ENCODE measurements at regions of chr1 and their contacts with region 1.

Region 1: DNA sequence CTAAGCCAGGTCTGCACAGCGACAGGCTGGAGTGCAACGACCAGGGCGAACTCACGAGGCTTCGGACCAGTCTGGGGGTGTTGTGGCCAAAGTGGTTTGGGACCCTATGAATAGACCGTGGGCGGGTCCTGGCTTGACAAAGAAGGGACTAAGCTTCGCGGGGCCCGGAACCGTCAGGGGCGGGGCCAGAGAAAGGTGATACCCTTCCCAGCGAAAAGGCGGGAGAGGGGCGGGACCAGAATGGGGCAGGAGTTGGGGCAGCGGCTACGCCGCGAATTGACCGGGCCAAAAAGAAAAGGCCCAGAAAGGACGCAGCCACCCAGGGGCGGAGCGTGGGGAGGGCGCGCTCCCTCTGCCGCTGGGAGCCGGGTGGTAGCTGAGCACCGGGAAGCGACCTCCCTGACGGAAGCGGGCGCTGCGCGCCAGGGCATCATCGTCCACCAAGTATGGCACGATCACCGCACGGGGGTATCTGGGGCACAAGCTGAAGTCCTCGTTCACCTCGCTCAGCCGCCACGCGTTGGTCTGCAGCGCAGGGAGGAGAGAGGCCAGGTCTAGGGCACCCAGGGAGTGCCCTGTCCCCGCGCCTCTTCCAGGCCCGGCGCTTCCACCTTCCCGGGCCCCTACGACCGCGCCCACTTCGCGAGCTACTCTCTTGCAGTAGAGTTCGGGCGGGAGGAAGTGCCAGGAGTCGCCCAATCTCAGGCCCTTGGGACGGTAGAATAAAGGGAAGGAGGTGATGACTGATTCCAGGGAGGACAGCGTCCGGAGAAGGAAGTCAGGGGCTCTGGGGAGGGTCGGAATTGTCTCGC is 6.7 kb upstream of the FAM167B start:
- DNase-seq: peak in 13 of 14 experiments; percentile 38 to 86 (median 63)
- ATAC-seq: peak; percentile 75
- H3K4me3 ChIP-seq: peak overlapping the region; percentile 90
- H3K4me3 Mint-ChIP-seq: peak overlapping the region; percentile 94
- H3K27ac ChIP-seq: peak overlapping the region; percentile 15 to 50
- H3K27ac Mint-ChIP-seq: peak overlapping the region; percentile 64
- H3K4me1 ChIP-seq: peaks cover 33% of the 10 kb centered on the region
- H3K4me1 Mint-ChIP-seq: peaks cover 25% of the 10 kb centered on the region
- H3K27me3 ChIP-seq: no peaks in the 10 kb centered on the region
- H3K27me3 Mint-ChIP-seq: no peaks in the 10 kb centered on the region
- CTCF ChIP-seq: peak; percentile 52

Region 2: DNA sequence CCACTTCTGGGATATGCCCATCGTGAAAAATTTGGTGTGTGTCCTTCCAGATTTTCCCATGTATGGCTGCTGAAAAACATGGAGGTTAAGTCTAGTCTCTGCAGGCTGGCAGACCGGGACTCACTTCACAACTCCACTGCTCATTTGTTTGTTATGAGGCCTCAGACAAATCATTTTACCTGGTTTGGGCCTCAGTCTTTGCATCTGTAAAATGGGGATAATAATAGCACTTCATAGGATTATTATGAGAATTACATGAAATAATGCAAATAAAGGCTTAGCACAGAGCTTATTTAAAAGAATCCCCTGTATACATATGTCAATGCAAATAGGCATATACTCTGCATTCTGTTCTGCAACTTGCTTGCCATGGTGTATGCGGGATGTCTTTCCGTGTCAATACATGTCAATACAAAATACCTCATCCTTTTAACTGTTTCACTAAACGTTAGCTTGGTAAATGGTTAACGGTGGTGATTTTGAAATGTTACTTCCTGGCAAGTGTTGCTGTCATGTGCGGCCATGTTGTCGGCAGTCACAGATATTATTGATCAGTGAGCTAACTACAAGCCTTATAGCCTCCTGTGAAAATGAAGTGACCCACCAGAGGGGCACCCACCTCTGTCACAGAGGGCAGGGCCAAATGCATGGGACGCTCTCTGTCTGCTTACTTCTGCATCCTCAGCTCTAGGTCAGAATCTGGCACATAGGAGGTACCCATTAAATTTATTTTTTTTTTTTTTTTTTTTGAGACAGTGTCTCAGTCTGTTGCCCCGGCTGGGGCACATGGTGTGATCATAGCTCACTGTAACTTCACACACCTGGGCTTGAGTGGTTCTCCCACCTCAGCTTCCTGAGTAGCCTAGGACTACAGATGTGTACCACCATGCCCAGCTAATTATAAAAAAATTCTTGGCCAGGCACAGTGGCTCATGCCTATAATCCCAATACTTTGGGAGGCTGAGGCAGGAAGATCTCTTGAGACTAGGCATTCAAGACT is 15.0 kb after region 1 on chr1:
- CTCF ChIA-PET with region 1: interaction called, 48 read pairs
- POLR2A ChIA-PET with region 1: interaction called, 543 read pairs
- intact Hi-C with region 1: loop called in 1 of 2 experiments (anchors 1 kb)
- DNase-seq: peak in 5 of 14 experiments; percentile 19 to 60 (median 53)
- ATAC-seq: peak; percentile 39
- H3K4me3 ChIP-seq: peak overlapping the region; percentile 71
- H3K4me3 Mint-ChIP-seq: peak overlapping the region; percentile 91
- H3K27ac ChIP-seq: peak overlapping the region; percentile 37 to 94
- H3K27ac Mint-ChIP-seq: peak overlapping the region; percentile 99
- H3K4me1 ChIP-seq: peaks cover 79% of the 10 kb centered on the region
- H3K4me1 Mint-ChIP-seq: peaks cover 57% of the 10 kb centered on the region
- H3K27me3 ChIP-seq: no peaks in the 10 kb centered on the region
- H3K27me3 Mint-ChIP-seq: no peaks in the 10 kb centered on the region
- CTCF ChIP-seq: no peak

Region 3: GRCh38 chr1:32291708-32292492 is 51.6 kb after region 1 on chr1 and contains the start of gene HDAC1:
- CTCF ChIA-PET with region 1: interaction called, 27 read pairs
- POLR2A ChIA-PET with region 1: interaction called, 175 read pairs
- intact Hi-C with region 1: no loop called
- DNase-seq: peak; percentile 93 to 98 (median 96)
- ATAC-seq: peak; percentile 91
- H3K4me3 ChIP-seq: peak within 1 kb of the TSS; percentile 98
- H3K4me3 Mint-ChIP-seq: peak within 1 kb of the TSS; percentile 100
- H3K27ac ChIP-seq: peak within 1 kb of the TSS; percentile 81
- H3K27ac Mint-ChIP-seq: peak within 1 kb of the TSS; percentile 92
- H3K4me1 ChIP-seq: peaks cover 67% of the 10 kb centered on the region
- H3K4me1 Mint-ChIP-seq: peaks cover 54% of the 10 kb centered on the region
- H3K27me3 ChIP-seq: no peaks in the 10 kb centered on the region
- H3K27me3 Mint-ChIP-seq: no peaks in the 10 kb centered on the region
- CTCF ChIP-seq: no peak
- total RNA-seq, gene HDAC1: 56.9 to 61.0 TPM

Region 4: GRCh38 chr1:32372149-32372756 is 131.9 kb after region 1 on chr1:
- CTCF ChIA-PET with region 1: interaction called, 19 read pairs
- POLR2A ChIA-PET with region 1: interaction called, 7 read pairs
- intact Hi-C with region 1: no loop called
- DNase-seq: peak; percentile 34 to 88 (median 48)
- ATAC-seq: peak; percentile 85
- H3K4me3 ChIP-seq: no peak overlapping the region
- H3K4me3 Mint-ChIP-seq: no peak overlapping the region
- H3K27ac ChIP-seq: no peak overlapping the region
- H3K27ac Mint-ChIP-seq: peak overlapping the region; percentile 18
- H3K4me1 ChIP-seq: peaks cover 15% of the 10 kb centered on the region
- H3K4me1 Mint-ChIP-seq: peaks cover 28% of the 10 kb centered on the region
- H3K27me3 ChIP-seq: no peaks in the 10 kb centered on the region
- H3K27me3 Mint-ChIP-seq: no peaks in the 10 kb centered on the region
- CTCF ChIP-seq: peak; percentile 58

Region 5: DNA sequence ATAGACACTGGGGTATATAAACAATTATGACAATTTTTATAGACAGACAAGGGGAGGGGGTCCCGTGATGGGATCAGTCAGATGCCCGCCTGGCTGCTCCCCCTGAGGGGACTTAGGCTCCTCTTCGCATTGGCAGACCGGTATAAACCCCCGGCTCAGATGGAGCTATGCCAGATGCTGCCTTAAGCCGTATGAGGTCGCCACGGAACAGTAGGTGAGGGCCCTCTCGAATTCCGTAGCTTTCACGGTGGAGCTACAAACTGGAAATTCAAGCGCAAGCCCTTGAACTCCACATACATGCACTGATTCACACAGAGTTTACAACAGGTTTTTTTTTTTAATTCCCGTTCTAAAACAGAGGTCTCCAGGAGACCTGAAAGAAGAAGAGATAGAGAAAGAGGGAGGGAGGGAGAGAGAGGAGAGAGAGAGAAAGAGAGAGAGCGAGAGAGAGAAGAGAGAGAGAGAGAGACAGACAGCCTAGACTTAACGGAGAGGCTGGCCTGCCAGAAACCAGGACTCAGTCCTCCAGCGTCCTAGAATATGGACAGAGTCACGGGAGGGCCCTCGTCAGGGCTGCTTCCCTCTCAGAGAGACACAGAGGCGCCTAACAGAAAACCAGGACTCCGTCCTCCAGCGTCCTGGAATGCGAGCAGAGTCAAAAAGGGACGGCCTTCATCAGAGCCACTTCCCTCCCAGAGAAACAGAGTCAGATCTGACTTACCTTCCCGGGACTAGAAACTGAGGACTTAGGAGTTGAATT is 685.2 kb after region 1 on chr1:
- CTCF ChIA-PET with region 1: no interaction called
- POLR2A ChIA-PET with region 1: no interaction called
- intact Hi-C with region 1: no loop called
- DNase-seq: peak in 6 of 14 experiments; percentile 8 to 56 (median 21)
- ATAC-seq: peak; percentile 57
- H3K4me3 ChIP-seq: no peak overlapping the region
- H3K4me3 Mint-ChIP-seq: peak overlapping the region; percentile 68
- H3K27ac ChIP-seq: no peak overlapping the region
- H3K27ac Mint-ChIP-seq: no peak overlapping the region
- H3K4me1 ChIP-seq: peaks cover 22% of the 10 kb centered on the region
- H3K4me1 Mint-ChIP-seq: peaks cover 23% of the 10 kb centered on the region
- H3K27me3 ChIP-seq: peaks cover 40 to 50% of the 10 kb centered on the region in 2 experiments
- H3K27me3 Mint-ChIP-seq: peaks cover 61% of the 10 kb centered on the region
- CTCF ChIP-seq: no peak